ENCODE measurements at regions of chr5 and their contacts with region 1.

Region 1: GRCh38 chr5:58530942-58531490 is 39.8 kb downstream of the GAPT start:
- DNase-seq: no peak
- ATAC-seq: no peak
- H3K4me3 ChIP-seq: no peak overlapping the region
- H3K27ac ChIP-seq: no peak overlapping the region
- H3K4me1 ChIP-seq: no peaks in the 10 kb centered on the region
- H3K27me3 ChIP-seq: no peaks in the 10 kb centered on the region
- CTCF ChIP-seq: no peak
- POLR2A ChIP-seq: no peak
- RAD21 ChIP-seq: no peak

Region 2: GRCh38 chr5:58505971-58506640 is 24.9 kb before region 1 on chr5:
- CTCF ChIA-PET with region 1: no interaction called
- POLR2A ChIA-PET with region 1: no interaction called
- dilution Hi-C with region 1: no loop called
- in situ Hi-C with region 1: no loop called
- intact Hi-C with region 1: loop called (anchors 1 kb)
- DNase-seq: no peak
- ATAC-seq: no peak
- H3K4me3 ChIP-seq: no peak overlapping the region
- H3K27ac ChIP-seq: no peak overlapping the region
- H3K4me1 ChIP-seq: no peaks in the 10 kb centered on the region
- H3K27me3 ChIP-seq: peaks cover 3% of the 10 kb centered on the region
- CTCF ChIP-seq: no peak
- POLR2A ChIP-seq: no peak
- RAD21 ChIP-seq: no peak

Region 3: GRCh38 chr5:58517198-58517597 is 13.8 kb before region 1 on chr5:
- CTCF ChIA-PET with region 1: no interaction called
- POLR2A ChIA-PET with region 1: no interaction called
- dilution Hi-C with region 1: no loop called
- in situ Hi-C with region 1: no loop called
- intact Hi-C with region 1: no loop called
- DNase-seq: no peak
- ATAC-seq: no peak
- H3K4me3 ChIP-seq: no peak overlapping the region
- H3K27ac ChIP-seq: no peak overlapping the region
- H3K4me1 ChIP-seq: no peaks in the 10 kb centered on the region
- H3K27me3 ChIP-seq: no peaks in the 10 kb centered on the region
- CTCF ChIP-seq: no peak
- POLR2A ChIP-seq: no peak
- RAD21 ChIP-seq: no peak

Region 4: GRCh38 chr5:58641533-58641932 is 110.5 kb after region 1 on chr5:
- CTCF ChIA-PET with region 1: no interaction called
- POLR2A ChIA-PET with region 1: no interaction called
- dilution Hi-C with region 1: no loop called
- in situ Hi-C with region 1: no loop called
- intact Hi-C with region 1: no loop called
- DNase-seq: no peak
- ATAC-seq: no peak
- H3K4me3 ChIP-seq: no peak overlapping the region
- H3K27ac ChIP-seq: no peak overlapping the region
- H3K4me1 ChIP-seq: no peaks in the 10 kb centered on the region
- H3K27me3 ChIP-seq: no peaks in the 10 kb centered on the region
- CTCF ChIP-seq: no peak
- POLR2A ChIP-seq: no peak
- RAD21 ChIP-seq: no peak